ENCODE measurements at regions of chr3 and their contacts with region 1.

Region 1: DNA sequence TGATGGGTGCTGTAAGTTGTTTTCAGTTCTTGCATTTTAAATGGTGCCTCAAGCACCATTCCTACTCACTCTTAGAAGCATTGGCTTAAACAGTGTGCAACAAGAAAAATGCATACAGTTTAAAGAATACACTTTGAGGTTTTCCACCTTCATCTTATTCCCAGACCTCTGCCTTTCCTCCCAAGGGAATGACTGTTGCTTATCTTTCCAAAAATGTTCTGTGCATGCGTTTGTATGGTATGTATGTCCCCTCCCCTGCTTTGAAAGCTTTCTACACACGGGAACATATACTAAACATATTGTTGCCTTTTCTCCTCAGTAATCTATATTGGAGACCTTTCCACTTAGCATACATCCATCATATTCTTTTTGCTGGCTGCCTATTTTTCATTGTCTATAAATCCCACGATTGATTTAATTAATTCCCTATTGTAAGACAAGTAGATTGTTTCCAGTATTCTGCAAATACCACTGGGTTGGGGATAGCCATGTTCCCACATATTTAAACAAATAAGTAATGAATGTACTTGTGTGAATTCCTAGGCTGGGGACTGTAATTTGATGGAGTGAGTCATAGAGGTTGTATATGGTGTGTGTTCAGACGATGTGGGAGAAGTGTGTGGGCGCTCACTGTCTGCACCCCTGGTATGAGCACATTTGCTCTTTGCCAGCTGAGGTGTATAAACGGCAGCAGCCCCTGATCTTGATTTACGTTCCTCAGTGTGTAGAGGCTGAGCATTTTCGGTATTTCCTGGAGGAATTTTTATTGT is 5.8 kb downstream of the TRAK1 start:
- DNase-seq: no peak
- H3K4me3 ChIP-seq: no peak overlapping the region
- CTCF ChIP-seq: no peak
- POLR2A ChIP-seq: no peak

Region 2: DNA sequence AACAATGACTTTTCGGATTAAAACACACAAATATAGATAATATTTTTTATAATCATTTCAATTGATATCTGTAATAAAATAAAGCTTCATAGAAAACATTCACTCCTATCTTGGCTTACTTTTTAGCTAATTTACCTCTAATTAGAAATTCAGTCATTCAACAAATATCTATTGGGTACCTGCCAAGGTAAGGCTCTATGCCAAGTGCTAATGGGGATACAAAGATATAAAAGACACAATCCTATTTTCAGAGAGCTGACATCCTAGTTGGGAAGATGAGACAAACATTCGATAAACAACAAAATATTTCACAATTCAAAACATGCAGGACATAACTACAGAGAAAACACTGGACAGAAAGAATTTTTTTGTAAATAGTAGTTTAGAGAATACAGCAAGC is 198.3 kb before region 1 on chr3:
- intact Hi-C with region 1: loop called (anchors 5 kb)
- DNase-seq: no peak
- H3K4me3 ChIP-seq: no peak overlapping the region
- CTCF ChIP-seq: no peak
- POLR2A ChIP-seq: no peak

Region 3: DNA sequence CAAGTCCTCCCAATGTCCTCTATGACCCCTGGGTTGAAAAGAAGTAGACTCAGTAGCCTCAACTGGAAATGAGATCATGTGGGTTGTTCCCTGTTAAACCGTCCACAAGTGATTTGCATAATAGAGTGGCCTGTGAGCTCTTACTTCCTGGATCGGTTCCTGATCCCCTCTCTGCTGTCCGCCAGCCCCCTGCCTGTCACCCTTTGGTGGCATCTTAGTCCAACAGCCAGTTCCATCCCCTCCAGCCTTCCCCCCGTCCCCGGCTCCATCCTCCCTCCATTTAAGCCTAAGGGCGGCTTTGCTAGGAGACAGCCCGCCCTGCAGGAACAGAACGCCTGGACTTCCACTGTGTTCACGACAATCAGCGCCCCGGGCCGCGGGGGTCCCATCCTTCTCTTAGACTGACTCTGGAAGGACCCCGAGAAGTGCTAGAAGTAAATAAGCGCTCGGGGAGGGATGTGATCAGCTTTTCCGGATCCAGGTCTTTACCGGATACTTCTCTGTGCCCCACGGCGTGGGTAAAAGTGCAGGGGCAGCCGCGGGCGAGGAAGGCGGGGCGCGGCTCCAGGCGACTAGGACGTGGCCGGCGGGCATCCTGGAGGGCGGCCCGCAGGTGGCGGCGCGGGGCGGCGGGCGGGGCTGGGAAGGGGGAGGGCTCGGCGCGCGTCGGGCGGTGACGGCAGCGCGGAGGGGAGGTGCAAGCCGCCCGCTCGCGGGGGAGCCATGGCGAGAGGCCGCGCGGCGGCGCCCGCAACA is 83.9 kb before region 1 on chr3:
- intact Hi-C with region 1: loop called (anchors 2 kb)
- DNase-seq: peak; percentile 35 to 93
- H3K4me3 ChIP-seq: peak overlapping the region; percentile 52
- CTCF ChIP-seq: no peak
- POLR2A ChIP-seq: no peak

Measured in lower leg skin (tissue), 4 donors.